ENCODE measurements at regions of chr17 and their contacts with region 1.

Region 1: DNA sequence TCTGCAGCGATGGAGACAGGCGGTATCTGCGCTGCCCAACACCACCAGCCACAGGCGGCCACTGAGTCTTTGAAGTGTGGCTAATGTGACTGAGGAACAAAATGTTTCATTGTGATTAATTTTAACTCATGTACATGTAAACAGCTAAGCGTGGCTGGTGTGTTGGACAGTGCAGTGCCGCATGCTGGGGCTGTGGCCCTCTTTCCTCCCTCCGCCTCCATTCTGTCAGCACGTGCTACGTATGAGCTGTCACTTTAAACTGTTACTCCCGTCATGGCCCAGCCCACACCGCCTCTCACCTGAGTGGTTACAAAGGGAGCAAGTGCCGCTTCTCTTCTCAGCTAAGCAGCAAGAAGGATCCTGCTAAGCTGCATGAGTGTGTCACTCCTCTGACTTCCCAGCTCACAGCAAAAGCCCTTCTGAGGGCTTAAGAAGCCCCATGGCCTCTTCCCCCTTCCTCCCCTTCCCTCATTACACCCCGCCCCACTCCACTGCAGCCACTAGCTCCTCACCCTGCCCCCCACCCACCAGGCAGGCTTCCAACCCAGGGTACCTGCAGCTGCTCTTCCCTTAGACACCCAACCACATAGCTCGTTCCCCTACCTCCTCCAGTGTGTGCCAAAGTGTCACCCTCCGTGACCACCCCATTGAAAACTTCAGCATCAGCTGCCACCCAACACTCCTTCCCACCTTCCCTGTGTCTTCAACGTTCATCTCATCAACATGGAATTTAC is 15.0 kb downstream of the HASPIN start:
- DNase-seq: peak; percentile 88
- ATAC-seq: peak; percentile 89
- H3K4me3 Mint-ChIP-seq: no peak overlapping the region
- H3K27ac Mint-ChIP-seq: peak overlapping the region; percentile 14
- H3K4me1 Mint-ChIP-seq: peaks cover 34% of the 10 kb centered on the region
- H3K27me3 Mint-ChIP-seq: no peaks in the 10 kb centered on the region

Region 2: GRCh38 chr17:3683054-3683511 is 55.6 kb before region 1 on chr17:
- CTCF ChIA-PET with region 1: interaction called, 6 read pairs
- POLR2A ChIA-PET with region 1: no interaction called
- intact Hi-C with region 1: loop called in 1 of 2 experiments (anchors 2 kb)
- DNase-seq: peak; percentile 76
- ATAC-seq: peak; percentile 96
- H3K4me3 Mint-ChIP-seq: no peak overlapping the region
- H3K27ac Mint-ChIP-seq: peak overlapping the region; percentile 39
- H3K4me1 Mint-ChIP-seq: peaks cover 10% of the 10 kb centered on the region
- H3K27me3 Mint-ChIP-seq: no peaks in the 10 kb centered on the region

Region 3: DNA sequence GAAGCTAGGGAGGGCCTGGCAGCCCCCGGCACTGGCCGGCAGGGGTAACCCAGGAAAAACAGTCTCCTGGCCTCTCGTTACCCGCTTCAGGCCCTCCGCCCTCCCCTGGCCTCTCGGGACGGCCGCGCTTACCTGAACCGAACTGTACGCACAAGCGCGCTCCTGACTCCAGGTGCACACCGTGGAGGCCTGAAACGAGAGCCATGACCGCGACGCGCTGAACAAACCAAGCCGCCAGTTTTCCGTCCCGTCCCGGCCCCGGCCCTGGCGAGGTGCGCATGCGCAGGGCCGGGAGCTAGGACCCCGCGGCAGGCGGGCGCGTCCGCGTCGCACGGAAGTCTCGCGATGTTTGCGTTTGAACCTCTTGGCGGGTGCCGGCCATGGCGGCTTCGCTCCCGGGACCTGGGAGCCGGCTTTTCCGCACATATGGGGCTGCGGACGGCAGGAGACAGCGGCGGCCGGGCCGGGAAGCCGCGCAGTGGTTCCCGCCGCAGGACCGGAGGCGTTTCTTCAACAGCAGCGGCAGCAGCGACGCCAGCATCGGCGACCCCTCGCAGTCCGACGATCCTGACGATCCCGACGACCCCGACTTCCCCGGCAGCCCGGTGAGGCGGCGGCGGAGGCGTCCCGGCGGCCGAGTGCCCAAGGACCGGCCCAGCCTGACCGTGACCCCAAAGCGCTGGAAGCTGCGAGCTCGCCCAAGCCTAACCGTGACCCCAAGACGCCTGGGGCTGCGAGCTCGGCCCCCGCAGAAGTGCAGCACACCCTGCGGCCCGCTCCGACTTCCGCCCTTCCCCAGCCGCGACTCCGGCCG is 15.0 kb before region 1 on chr17 and contains the start of gene HASPIN:
- CTCF ChIA-PET with region 1: interaction called, 36 read pairs
- POLR2A ChIA-PET with region 1: interaction called, 6 read pairs
- intact Hi-C with region 1: loop called in 1 of 2 experiments (anchors 1 kb)
- DNase-seq: peak; percentile 96
- ATAC-seq: peak; percentile 86
- H3K4me3 Mint-ChIP-seq: peak within 1 kb of the TSS; percentile 83
- H3K27ac Mint-ChIP-seq: peak within 1 kb of the TSS; percentile 93
- H3K4me1 Mint-ChIP-seq: peaks cover 58% of the 10 kb centered on the region
- H3K27me3 Mint-ChIP-seq: no peaks in the 10 kb centered on the region
- total RNA-seq, gene HASPIN: 21.0 to 25.2 TPM

Region 4: GRCh38 chr17:3782751-3783150 is 44.0 kb after region 1 on chr17:
- CTCF ChIA-PET with region 1: interaction called, 17 read pairs
- POLR2A ChIA-PET with region 1: no interaction called
- intact Hi-C with region 1: no loop called
- DNase-seq: no peak
- ATAC-seq: no peak
- H3K4me3 Mint-ChIP-seq: no peak overlapping the region
- H3K27ac Mint-ChIP-seq: no peak overlapping the region
- H3K4me1 Mint-ChIP-seq: no peaks in the 10 kb centered on the region
- H3K27me3 Mint-ChIP-seq: no peaks in the 10 kb centered on the region

Region 5: DNA sequence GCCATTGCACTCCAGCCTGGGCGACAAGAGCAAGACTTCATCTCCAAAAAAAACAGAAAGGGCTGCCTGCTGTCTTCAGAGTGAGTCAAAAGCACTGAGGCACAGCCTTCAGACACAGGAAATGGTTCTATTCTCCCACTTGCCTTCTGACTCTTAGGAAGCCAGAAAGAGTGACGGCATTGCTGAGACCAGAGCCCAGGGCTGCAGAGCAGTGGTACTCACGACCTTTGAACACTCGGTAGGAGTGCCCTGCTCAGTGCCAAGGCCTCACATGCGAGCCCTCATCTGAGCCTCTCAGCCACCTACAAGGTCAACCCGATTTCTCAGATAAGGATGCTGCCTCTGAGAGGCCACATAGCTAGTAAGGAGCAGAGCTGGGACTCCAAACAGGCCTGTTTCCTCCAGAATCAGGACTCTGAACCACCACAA is 65.8 kb after region 1 on chr17:
- CTCF ChIA-PET with region 1: interaction called, 27 read pairs
- POLR2A ChIA-PET with region 1: no interaction called
- intact Hi-C with region 1: no loop called
- DNase-seq: peak; percentile 61
- ATAC-seq: peak; percentile 98
- H3K4me3 Mint-ChIP-seq: no peak overlapping the region
- H3K27ac Mint-ChIP-seq: peak overlapping the region; percentile 19
- H3K4me1 Mint-ChIP-seq: peaks cover 26% of the 10 kb centered on the region
- H3K27me3 Mint-ChIP-seq: no peaks in the 10 kb centered on the region

Region 6: DNA sequence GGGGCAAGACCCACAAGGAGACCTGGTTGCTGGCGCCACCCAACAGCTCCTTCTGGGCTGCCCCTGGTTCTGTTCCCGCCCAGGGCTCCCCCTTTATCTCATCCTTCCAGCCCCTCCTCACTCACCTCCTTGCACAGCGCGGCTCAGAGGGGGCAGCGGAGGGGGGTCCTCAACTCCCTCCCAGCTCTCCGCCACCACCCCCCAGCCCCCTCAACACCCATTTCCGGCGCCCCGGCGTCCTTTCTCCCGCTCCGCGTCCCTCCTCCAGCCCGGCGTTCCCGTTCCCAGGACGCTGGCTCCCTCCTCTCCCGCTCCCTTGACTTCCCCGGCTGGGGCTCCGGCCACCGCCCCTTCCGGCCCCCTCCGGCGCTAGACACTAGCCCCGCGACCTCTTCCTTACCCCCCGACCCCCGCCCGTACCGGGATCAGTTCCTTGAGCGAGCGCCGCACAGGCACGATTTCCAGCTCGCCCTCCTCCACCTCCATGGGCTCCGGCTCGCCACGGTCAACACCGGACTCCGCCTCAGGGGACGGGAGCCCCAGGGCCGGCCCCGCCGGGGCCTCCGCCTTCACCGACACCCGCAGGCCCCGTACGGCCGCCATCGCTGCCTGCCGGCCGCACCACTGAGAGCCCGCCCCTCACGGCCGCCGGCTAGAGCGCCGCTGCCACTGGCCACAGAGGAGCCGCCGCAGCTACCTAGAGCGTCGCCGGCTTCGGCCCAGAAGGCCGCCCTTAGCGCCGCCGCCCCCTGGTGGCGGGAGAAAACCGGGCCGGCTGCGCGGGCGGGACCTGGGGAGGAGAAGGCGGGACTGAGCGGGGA is 107.1 kb after region 1 on chr17 and contains the start of gene NCBP3:
- CTCF ChIA-PET with region 1: interaction called, 86 read pairs
- POLR2A ChIA-PET with region 1: interaction called, 5 read pairs
- intact Hi-C with region 1: loop called (anchors 1 kb)
- DNase-seq: peak; percentile 96
- ATAC-seq: peak; percentile 93
- H3K4me3 Mint-ChIP-seq: peak within 1 kb of the TSS; percentile 84
- H3K27ac Mint-ChIP-seq: peak within 1 kb of the TSS; percentile 91
- H3K4me1 Mint-ChIP-seq: peaks cover 19% of the 10 kb centered on the region
- H3K27me3 Mint-ChIP-seq: no peaks in the 10 kb centered on the region
- total RNA-seq, gene NCBP3: 35.9 to 44.6 TPM

Region 7: DNA sequence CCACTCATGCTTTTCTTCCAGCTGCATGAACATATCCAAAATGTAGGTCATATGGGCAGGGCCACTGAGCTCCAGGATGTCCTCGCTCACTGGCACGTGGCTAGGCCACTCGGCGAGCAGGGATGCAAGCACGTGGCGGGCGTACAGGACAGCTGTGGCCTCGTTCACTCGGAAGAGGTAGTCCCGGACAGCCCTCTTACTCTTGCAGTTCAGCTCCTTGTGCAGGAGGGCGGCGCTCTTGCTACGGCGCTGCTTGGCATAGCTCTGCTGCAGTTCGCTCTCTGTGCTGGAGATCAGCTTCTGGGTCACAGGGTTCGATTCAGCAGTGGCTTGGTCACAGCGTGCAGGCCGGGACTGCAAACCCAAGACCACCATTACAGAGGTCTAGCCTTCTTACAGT is 278.6 kb after region 1 on chr17:
- CTCF ChIA-PET with region 1: no interaction called
- POLR2A ChIA-PET with region 1: no interaction called
- intact Hi-C with region 1: no loop called
- DNase-seq: no peak
- ATAC-seq: no peak
- H3K4me3 Mint-ChIP-seq: no peak overlapping the region
- H3K27ac Mint-ChIP-seq: no peak overlapping the region
- H3K4me1 Mint-ChIP-seq: no peaks in the 10 kb centered on the region
- H3K27me3 Mint-ChIP-seq: no peaks in the 10 kb centered on the region